ENCODE measurements at regions of chr2 and their contacts with region 1.

Region 1: GRCh38 chr2:30146438-30147147 is at the start of gene YPEL5:
- DNase-seq: peak; percentile 97 to 100 (median 100)
- ATAC-seq: peak; percentile 85 to 90 (median 88)
- H3K4me3 ChIP-seq: peak within 1 kb of the TSS; percentile 67 to 77
- H3K4me3 Mint-ChIP-seq: peak within 1 kb of the TSS; percentile 83 to 94 (median 84)
- H3K27ac ChIP-seq: peak within 1 kb of the TSS; percentile 99
- H3K27ac Mint-ChIP-seq: peak within 1 kb of the TSS; percentile 99 to 100
- H3K4me1 ChIP-seq: peaks cover 22 to 36% of the 10 kb centered on the region in 2 experiments
- H3K4me1 Mint-ChIP-seq: peaks cover 56 to 61% (median 58%) of the 10 kb centered on the region in 3 donors
- H3K27me3 ChIP-seq: no peaks in the 10 kb centered on the region
- H3K27me3 Mint-ChIP-seq: no peaks in the 10 kb centered on the region
- total RNA-seq, gene YPEL5: 73.0 to 962 (median 77.3) TPM

Region 2: GRCh38 chr2:30195016-30195415 is 48.4 kb after region 1 on chr2:
- CTCF ChIA-PET with region 1: no interaction called
- POLR2A ChIA-PET with region 1: no interaction called
- DNase-seq: no peak
- ATAC-seq: no peak
- H3K4me3 ChIP-seq: no peak overlapping the region
- H3K4me3 Mint-ChIP-seq: no peak overlapping the region
- H3K27ac ChIP-seq: no peak overlapping the region
- H3K27ac Mint-ChIP-seq: peak overlapping the region in 1 of 2 donors; percentile 20
- H3K4me1 ChIP-seq: no peaks in the 10 kb centered on the region
- H3K4me1 Mint-ChIP-seq: no peaks in the 10 kb centered on the region
- H3K27me3 ChIP-seq: peaks cover 0 to 5% of the 10 kb centered on the region in 2 experiments
- H3K27me3 Mint-ChIP-seq: peaks cover 0 to 3% of the 10 kb centered on the region in 2 donors

Region 3: GRCh38 chr2:30225131-30225762 is 78.7 kb after region 1 on chr2:
- CTCF ChIA-PET with region 1: interaction called in 1 of 2 experiments, 3 read pairs
- POLR2A ChIA-PET with region 1: interaction called in 1 of 2 experiments, 13 read pairs
- DNase-seq: peak in 32 of 35 experiments; percentile 21 to 78 (median 46)
- ATAC-seq: peak; percentile 83 to 86 (median 86)
- H3K4me3 ChIP-seq: peak overlapping the region; percentile 50 to 67
- H3K4me3 Mint-ChIP-seq: peak overlapping the region; percentile 85 to 97 (median 95)
- H3K27ac ChIP-seq: peak overlapping the region; percentile 96
- H3K27ac Mint-ChIP-seq: peak overlapping the region; percentile 98 to 100
- H3K4me1 ChIP-seq: peaks cover 44 to 72% of the 10 kb centered on the region in 2 experiments
- H3K4me1 Mint-ChIP-seq: peaks cover 77 to 84% (median 80%) of the 10 kb centered on the region in 3 donors
- H3K27me3 ChIP-seq: no peaks in the 10 kb centered on the region
- H3K27me3 Mint-ChIP-seq: no peaks in the 10 kb centered on the region

Measured in T-cell (primary cell).